Sigmoid colon (tissue), 7 donors: ENCODE measurements at regions of chr10 and their contacts with region 1.

Region 1: DNA sequence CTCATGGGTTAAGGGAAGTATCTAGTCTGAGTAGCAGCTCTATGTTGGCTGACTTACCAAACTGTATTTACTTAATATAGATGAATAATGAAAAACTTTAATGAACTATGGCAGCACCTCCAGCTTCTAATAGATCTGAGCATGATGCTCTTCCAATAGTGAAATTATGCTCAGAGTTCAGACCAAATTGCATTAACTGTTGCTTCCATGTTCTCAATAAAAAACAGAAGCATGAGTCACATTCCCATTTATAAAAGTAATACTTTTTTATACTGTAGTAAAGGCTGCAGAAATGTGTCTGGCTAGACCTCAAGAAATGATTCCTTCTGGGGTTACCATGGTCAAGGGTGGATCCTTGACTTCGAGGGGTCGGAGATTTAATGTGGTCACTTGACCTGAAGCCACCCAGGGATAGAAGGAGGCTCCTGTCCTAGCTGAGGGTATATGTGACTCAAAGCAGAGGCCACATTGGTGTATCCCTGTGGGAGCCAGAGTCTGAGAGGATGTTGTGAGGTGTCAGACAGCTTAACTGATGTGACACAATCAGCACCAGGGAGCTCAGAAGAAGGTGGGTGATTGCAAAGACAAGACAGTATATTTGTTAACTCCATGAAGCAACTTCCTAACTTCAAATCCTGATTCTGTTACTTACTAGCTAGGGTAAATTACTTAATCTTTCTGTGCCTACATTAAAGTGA is 19.8 kb upstream of the PLCE1 start:
- DNase-seq: no peak
- H3K4me3 ChIP-seq: no peak overlapping the region
- H3K27ac ChIP-seq: no peak overlapping the region
- H3K4me1 ChIP-seq: no peaks in the 10 kb centered on the region
- H3K27me3 ChIP-seq: no peaks in the 10 kb centered on the region
- CTCF ChIP-seq: no peak
- EP300 ChIP-seq: no peak
- POLR2A ChIP-seq: no peak

Region 2: DNA sequence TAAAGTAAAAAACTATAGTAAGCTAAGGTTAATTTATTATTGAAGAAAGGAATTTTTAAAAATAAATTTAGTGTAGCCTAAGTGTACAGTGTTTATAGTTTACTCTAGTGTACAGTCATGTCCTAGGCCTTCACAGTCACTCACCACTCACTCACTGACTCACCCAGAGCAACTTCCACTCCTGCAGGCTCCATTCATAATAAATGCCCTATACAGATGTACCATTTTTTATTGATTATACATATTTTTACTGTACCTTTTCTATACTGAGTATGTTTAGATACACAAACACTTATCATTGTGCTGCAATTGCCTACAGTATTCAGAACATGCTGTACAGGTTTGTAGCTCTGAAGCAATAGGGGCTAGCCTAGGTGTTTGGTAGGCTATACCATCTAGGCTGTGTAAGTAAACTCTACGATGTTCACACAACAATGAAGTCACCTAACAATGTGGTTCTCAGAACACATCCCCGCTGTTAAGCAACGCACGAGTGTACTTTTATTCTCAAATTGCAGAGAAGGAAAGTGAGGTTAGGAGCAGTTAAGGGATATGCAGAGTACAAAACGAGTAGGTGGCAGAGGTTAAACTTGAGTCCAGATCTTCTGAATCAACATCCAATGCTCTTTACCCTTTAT is 19.1 kb before region 1 on chr10:
- intact Hi-C with region 1: loop called (anchors 2 kb)
- DNase-seq: no peak
- H3K4me3 ChIP-seq: no peak overlapping the region
- H3K27ac ChIP-seq: no peak overlapping the region
- H3K4me1 ChIP-seq: no peaks in the 10 kb centered on the region
- H3K27me3 ChIP-seq: no peaks in the 10 kb centered on the region
- CTCF ChIP-seq: no peak
- EP300 ChIP-seq: no peak
- POLR2A ChIP-seq: no peak